Caco-2 (cell line): ENCODE measurements at regions of chr12 and their contacts with region 1.

Region 1: DNA sequence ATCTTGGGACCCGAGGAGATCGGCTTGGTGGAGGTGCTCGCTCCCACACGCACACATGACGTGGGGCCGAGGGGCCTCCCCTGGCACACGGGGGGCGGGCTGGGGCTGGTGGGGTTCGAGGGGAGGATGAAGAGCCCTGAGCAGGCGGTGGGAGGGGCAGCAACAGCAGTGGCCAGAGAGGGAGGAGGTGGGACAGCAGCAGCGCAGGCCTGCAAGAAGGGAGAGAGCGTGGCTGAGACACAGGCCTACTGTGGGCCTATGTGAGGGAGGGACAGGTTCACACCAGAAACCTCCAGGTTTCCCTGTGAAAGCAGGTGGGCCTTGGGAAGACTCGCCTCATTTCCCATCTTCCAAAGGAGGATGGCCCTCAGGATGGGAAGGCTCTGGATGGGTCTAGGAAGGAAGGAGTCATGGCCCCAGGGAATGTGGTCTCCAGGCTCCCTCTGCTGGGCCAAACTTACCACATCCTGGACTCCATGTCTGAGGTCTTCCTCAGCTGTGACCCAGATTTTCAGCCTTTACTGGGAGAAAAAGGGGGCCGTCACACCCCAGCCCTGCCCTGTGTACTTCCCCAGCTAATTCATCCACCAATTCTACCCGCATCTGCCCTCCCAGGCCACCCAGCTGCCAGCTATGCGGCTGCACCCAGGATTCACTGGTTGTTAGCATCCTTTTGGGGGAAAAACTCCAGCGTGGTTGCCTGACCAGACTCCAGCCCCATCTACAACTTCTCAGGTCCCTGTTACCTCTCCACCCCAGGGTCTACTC is 2.8 kb downstream of the PIANP start:
- DNase-seq: peak; percentile 78 to 81
- H3K4me3 ChIP-seq: no peak overlapping the region
- H3K4me3 Mint-ChIP-seq: no peak overlapping the region
- H3K27ac Mint-ChIP-seq: no peak overlapping the region
- H3K4me1 ChIP-seq: peaks cover 5% of the 10 kb centered on the region
- H3K4me1 Mint-ChIP-seq: peaks cover 9% of the 10 kb centered on the region
- H3K27me3 ChIP-seq: peaks cover 5% of the 10 kb centered on the region
- H3K27me3 Mint-ChIP-seq: peaks cover 51% of the 10 kb centered on the region
- CTCF ChIP-seq: peak; percentile 90 to 93

Region 2: DNA sequence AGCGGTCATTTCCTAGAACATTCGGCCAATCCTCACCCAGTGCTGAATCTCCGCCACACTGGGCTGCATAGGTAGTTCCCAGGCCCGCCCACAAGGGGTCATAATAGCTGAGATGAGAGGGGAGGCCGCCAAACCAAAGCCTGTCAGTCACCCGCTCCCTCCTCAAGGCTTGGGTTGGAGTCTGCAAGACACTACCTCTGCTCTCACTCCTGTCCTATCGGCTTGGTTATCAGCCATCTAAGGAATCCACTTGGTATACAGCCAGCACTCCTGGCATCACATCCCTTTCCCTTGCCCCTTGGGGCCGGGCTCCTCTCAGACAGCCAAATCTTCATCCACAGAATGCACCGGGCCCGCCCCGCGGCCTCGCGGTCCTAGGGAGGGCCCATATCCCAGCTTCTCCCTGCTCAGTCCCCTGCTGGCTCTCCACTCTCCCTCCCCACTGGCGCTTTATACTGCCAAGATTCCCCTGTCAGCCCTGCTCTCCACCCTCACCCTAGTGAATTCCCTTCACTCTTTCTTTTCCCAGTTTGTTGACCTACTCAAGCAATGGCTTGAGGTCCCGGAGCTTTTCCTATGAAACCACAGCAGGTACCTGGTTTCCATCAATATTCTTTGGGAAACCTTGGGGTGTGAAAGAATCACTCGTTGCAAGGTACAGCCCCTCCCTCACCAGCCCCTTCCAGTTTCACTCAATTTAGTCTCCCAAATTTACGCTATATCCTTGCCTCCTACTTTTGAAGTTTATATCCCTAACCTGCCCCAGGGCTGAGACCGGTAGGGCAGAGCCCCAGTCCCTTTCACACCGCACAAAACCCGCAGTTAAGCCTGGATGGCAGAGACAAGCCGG is 143.4 kb before region 1 on chr12:
- CTCF ChIA-PET with region 1: interaction called, 10 read pairs
- POLR2A ChIA-PET with region 1: no interaction called
- intact Hi-C with region 1: loop called (anchors 5 kb)
- DNase-seq: peak; percentile 87 to 91
- H3K4me3 ChIP-seq: no peak overlapping the region
- H3K4me3 Mint-ChIP-seq: no peak overlapping the region
- H3K27ac Mint-ChIP-seq: no peak overlapping the region
- H3K4me1 ChIP-seq: peaks cover 7% of the 10 kb centered on the region; the same call in 1 of the 2 replicates
- H3K4me1 Mint-ChIP-seq: no peaks in the 10 kb centered on the region
- H3K27me3 ChIP-seq: no peaks in the 10 kb centered on the region
- H3K27me3 Mint-ChIP-seq: no peaks in the 10 kb centered on the region
- CTCF ChIP-seq: peak; percentile 78 to 84

Region 3: GRCh38 chr12:6662906-6663742 is 34.6 kb before region 1 on chr12 and contains the start of gene ING4:
- CTCF ChIA-PET with region 1: interaction called, 4 read pairs
- POLR2A ChIA-PET with region 1: no interaction called
- intact Hi-C with region 1: loop called (anchors 1 kb)
- DNase-seq: peak; percentile 99 to 100
- H3K4me3 ChIP-seq: peak within 1 kb of the TSS; percentile 60
- H3K4me3 Mint-ChIP-seq: peak within 1 kb of the TSS; percentile 79
- H3K27ac Mint-ChIP-seq: peak within 1 kb of the TSS; percentile 83
- H3K4me1 ChIP-seq: peaks cover 12% of the 10 kb centered on the region; the same call in 1 of the 2 replicates
- H3K4me1 Mint-ChIP-seq: peaks cover 14% of the 10 kb centered on the region
- H3K27me3 ChIP-seq: no peaks in the 10 kb centered on the region
- H3K27me3 Mint-ChIP-seq: no peaks in the 10 kb centered on the region
- CTCF ChIP-seq: peak in 1 of 2 experiments; percentile 0
- total RNA-seq, gene ING4: 31.6 and 32.8 TPM in 2 replicates

Region 4: DNA sequence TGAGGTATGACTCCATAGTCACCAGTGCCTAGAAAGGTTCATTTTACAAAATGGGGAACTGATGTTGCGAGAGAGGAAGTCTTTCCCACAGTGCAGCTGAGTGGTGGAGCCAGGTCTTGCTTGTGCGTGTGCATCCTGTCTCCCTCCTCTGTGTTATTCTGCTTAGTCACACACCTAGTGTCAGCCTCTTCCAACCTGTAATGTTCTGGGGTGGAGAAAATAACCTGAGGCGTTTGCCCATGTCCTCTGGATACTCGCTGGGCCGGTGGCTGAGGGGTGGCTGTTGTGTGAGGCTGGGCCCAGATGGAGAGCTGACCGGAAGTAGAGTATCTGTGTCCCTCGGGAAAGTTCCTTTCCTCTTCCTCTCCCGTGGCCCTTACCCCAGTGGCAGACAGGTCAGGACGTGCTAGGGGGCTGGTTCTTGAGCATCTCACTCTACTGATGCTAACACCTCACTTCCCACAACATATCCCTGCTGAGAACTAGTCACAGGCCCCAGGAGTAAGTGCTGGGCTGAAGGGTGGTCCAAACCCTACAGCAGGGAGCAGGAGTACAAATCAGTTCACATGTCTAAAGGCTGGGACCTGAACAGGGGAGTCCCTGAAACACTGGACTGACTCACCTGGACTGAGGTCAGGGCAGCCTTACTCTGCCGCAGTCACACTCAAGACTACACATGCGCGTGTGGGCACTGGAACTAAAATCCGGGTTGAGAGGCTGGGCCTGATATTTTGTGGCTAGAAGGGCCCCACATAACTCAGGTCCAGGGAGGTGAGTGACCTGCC is 48.2 kb after region 1 on chr12:
- CTCF ChIA-PET with region 1: no interaction called
- POLR2A ChIA-PET with region 1: no interaction called
- intact Hi-C with region 1: no loop called
- DNase-seq: no peak
- H3K4me3 ChIP-seq: no peak overlapping the region
- H3K4me3 Mint-ChIP-seq: no peak overlapping the region
- H3K27ac Mint-ChIP-seq: no peak overlapping the region
- H3K4me1 ChIP-seq: peaks cover 7% of the 10 kb centered on the region
- H3K4me1 Mint-ChIP-seq: peaks cover 10% of the 10 kb centered on the region
- H3K27me3 ChIP-seq: no peaks in the 10 kb centered on the region
- H3K27me3 Mint-ChIP-seq: no peaks in the 10 kb centered on the region
- CTCF ChIP-seq: no peak

Region 5: DNA sequence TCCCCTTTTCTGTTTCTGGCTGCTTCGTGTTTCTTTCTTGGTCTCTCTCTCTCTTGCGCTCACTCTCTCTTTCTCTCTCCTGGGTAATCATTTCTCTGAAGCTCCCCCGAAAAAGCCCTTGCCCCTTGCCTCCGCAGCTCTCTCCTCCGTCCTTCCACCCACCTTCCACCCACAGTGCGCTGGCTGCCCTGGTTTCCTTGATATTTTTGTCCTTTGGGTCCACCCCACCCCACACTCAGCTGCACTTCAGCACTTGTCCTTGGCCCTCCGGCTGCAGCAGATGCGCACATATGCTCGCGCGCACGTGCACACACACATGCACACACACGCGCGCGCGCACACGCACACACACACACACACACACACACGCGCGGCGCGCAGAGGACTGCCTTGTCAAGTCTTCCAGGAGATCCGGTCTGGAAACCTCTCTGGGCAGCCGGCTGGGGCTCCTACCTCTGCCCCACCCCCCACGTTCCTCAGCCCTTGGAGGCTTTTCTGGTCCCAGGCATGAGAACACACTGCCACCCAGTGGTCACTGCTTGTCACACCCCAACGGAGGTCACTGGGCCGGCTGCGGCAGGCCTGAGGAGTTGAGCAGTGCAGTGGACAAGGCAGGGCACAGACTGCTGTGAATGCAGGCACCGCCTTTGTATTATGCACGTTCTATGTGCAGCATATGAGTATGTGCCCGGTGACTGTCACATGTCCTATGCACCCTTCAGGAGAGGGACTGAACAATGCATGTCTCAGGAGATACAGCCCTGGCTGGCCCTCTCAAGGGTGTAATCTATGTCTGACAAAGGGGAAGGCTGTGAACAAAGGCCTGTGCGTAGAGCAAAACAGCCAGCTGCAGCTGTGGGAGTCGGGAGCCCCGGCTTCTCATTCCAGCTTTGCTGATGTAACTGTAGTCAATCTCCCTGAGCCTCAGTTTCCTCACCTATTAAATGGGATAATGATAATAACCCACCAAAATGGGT is 81.1 kb after region 1 on chr12:
- CTCF ChIA-PET with region 1: no interaction called
- POLR2A ChIA-PET with region 1: no interaction called
- intact Hi-C with region 1: no loop called
- DNase-seq: peak; percentile 98 to 99
- H3K4me3 ChIP-seq: peak overlapping the region; percentile 44
- H3K4me3 Mint-ChIP-seq: peak overlapping the region; percentile 81
- H3K27ac Mint-ChIP-seq: peak overlapping the region; percentile 58
- H3K4me1 ChIP-seq: peaks cover 31% of the 10 kb centered on the region
- H3K4me1 Mint-ChIP-seq: peaks cover 43% of the 10 kb centered on the region
- H3K27me3 ChIP-seq: no peaks in the 10 kb centered on the region
- H3K27me3 Mint-ChIP-seq: no peaks in the 10 kb centered on the region
- CTCF ChIP-seq: peak; percentile 99

Region 6: DNA sequence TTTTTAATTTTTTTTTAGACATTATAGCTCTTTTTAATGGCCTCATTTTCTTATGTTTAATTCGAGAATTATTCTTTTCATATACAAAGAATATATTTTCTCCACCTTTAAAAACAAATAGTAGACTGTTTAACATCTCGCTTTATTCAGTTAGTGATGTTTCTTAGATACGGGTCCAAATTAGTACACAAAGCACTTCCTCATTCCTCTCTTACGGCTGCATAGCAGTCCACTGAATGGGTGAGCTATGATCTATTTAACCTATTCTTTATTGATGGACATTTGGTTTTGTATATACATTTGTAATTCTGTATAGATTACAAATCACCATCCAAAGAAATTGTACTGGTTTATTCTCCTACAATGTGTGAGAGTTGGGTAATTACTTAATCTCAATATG is 115.6 kb after region 1 on chr12:
- CTCF ChIA-PET with region 1: no interaction called
- POLR2A ChIA-PET with region 1: no interaction called
- intact Hi-C with region 1: no loop called
- DNase-seq: no peak
- H3K4me3 ChIP-seq: no peak overlapping the region
- H3K4me3 Mint-ChIP-seq: no peak overlapping the region
- H3K27ac Mint-ChIP-seq: no peak overlapping the region
- H3K4me1 ChIP-seq: no peaks in the 10 kb centered on the region; the same call in 1 of the 2 replicates
- H3K4me1 Mint-ChIP-seq: peaks cover 10% of the 10 kb centered on the region
- H3K27me3 ChIP-seq: no peaks in the 10 kb centered on the region
- H3K27me3 Mint-ChIP-seq: no peaks in the 10 kb centered on the region
- CTCF ChIP-seq: no peak

Region 7: DNA sequence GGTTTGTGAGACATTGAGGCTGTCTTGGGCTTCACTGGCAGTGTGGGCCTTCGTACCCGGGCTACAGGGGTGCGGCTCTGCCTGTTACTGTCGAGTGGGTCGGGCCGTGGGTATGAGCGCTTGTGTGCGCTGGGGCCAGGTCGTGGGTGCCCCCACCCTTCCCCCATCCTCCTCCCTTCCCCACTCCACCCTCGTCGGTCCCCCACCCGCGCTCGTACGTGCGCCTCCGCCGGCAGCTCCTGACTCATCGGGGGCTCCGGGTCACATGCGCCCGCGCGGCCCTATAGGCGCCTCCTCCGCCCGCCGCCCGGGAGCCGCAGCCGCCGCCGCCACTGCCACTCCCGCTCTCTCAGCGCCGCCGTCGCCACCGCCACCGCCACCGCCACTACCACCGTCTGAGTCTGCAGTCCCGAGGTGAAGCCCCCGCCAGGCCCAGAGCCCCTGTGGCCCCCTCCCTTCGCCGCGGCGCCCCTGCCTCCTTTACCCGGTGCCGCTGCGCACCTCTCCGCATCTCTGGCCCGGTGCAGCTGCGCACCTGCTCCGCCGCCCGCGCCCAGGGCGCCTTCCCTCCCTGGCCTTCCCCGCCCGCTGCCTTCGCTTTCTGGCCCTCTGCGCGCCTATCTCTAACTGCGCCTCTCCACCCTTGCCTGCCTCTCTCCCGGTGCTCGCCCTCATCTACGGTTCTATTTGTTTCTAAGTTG is 216.6 kb after region 1 on chr12 and contains the start of gene ENO2:
- CTCF ChIA-PET with region 1: no interaction called
- POLR2A ChIA-PET with region 1: no interaction called
- intact Hi-C with region 1: no loop called
- DNase-seq: peak; percentile 63 to 73
- H3K4me3 ChIP-seq: peak within 1 kb of the TSS; percentile 69
- H3K4me3 Mint-ChIP-seq: peak within 1 kb of the TSS; percentile 96
- H3K27ac Mint-ChIP-seq: no peak within 1 kb of the TSS
- H3K4me1 ChIP-seq: peaks cover 14% of the 10 kb centered on the region
- H3K4me1 Mint-ChIP-seq: peaks cover 9% of the 10 kb centered on the region
- H3K27me3 ChIP-seq: no peaks in the 10 kb centered on the region
- H3K27me3 Mint-ChIP-seq: no peaks in the 10 kb centered on the region
- CTCF ChIP-seq: no peak
- total RNA-seq, gene ENO2: 23.2 and 25.3 TPM in 2 replicates